Activated B cell treated with CpG ODN at 0.5 μM for 24 hours (primary cell): ENCODE measurements at regions of chr16 and their contacts with region 1.

Region 1: DNA sequence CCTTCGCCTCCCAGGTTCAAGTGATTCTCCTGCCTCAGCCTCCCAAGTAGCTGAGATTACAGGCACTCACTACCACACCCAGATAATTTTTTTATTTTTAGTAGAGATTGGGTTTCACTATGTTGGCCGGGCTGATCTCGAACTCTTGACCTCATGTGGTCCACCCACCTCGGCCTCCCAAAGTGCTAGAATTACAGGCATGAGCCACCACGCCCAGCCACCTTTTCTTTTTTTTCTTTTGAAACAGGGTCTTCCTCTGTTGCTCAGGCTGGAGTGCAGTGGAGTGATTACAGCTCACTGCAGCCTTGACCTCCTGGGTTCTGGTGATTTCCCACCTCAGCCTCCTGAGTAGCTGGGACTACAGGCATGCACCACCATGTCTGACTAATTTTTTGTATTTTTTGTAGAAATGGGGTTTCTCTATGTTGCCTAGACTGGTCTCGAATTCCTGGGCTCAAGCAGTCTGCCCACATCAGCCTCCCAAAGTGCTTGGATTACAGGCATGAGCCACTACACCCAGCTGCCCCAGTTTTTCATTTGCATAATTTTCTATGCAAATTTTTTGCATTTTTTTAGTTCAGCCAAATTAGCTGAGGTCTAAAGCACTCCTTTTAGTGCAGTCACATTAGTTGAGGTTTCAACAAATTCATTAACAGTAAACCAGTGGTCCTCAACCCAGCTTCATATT is 11.3 kb downstream of the WWP2 start:
- DNase-seq: no peak
- ATAC-seq: peak; percentile 56
- H3K4me3 Mint-ChIP-seq: no peak overlapping the region
- H3K27ac Mint-ChIP-seq: peak overlapping the region; percentile 56
- H3K4me1 Mint-ChIP-seq: peaks cover 55% of the 10 kb centered on the region
- H3K27me3 Mint-ChIP-seq: no peaks in the 10 kb centered on the region
- CTCF ChIP-seq: no peak

Region 2: DNA sequence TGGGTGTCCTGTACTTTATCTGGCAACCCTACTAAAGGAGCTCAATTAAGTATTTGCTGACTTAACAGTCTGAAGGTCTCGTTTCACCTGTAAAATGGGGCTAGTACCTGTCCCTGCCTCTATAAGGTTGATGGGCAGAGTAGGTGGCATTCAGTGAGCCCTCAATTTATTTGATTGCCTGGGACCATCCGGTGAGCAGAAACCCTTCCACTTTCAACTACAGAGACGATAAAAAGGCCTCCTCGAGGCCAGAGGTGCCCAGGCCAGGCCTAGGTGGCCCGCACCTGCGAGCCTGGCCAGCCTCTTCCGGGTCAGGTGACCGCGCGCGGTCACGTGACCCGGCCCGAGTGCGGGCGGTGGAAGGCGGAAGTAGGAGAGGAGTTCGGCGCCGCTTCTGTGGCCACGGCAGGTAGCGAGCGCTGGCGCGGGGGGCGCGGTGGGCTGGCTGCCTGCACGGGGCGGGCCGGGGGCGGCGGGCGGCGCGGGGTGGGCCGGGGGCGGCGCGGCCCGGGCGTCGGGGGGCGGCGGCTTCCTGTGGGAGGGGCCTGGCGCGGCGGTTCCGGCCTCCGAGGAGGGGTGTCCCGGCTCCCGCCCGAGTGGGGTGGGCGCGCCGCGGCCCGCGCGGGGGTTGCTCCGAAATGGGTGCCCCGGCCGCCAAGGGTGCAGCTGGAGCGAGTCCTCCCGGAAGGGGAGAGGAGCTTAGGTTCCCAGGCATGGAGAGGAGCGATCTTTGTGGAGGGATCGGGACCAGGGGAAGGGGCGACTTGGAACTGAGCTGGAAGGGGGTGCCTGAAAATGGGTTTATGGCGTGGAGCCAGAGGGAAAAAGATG is 11.2 kb before region 1 on chr16 and contains the start of gene WWP2:
- CTCF ChIA-PET with region 1: no interaction called
- POLR2A ChIA-PET with region 1: interaction called, 15 read pairs
- intact Hi-C with region 1: no loop called
- DNase-seq: peak; percentile 73
- ATAC-seq: peak; percentile 86
- H3K4me3 Mint-ChIP-seq: peak within 1 kb of the TSS; percentile 90
- H3K27ac Mint-ChIP-seq: peak within 1 kb of the TSS; percentile 96
- H3K4me1 Mint-ChIP-seq: peaks cover 36% of the 10 kb centered on the region
- H3K27me3 Mint-ChIP-seq: no peaks in the 10 kb centered on the region
- CTCF ChIP-seq: no peak
- total RNA-seq, gene WWP2: 69.4 and 80.8 TPM in 2 replicates